WTC11 (cell line): ENCODE measurements at regions of chr15 and their contacts with region 1.

Region 1: DNA sequence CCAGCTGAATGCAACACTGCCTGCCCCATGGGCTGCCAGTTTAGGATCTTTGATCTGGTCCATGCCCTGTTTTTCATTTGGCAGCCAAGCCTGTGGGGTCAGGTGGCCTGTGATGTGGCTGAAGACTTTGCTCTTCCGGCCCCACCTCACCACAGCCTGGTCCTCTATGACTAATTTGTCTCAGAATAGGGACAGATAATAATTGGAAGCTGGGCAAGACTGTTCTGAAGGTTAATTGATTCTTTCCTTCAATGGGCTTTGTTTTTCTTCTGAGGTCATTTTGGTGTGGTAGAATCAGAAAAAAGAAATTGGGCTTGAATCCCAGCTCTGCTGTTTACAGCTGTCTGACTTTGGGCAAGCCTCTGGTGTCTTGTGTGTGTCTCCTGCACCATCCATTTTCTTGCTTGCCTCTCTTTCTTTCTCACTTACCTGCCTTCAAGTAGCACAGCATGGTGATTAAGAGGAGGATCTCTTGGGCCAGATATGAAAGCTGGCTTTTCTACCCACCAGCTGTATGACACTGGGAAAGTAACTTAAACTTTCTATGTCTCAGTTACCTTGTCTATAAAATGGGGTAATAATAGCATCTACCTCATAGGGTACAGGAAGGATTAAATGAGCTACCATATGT is 24.2 kb downstream of the ABHD2 start:
- DNase-seq: no peak
- ATAC-seq: no peak
- H3K4me3 Mint-ChIP-seq: no peak overlapping the region
- H3K27ac Mint-ChIP-seq: peak overlapping the region; percentile 54
- H3K4me1 Mint-ChIP-seq: peaks cover 87% of the 10 kb centered on the region
- H3K27me3 Mint-ChIP-seq: no peaks in the 10 kb centered on the region
- CTCF ChIP-seq: no peak

Region 2: GRCh38 chr15:88878720-88879184 is 233.7 kb before region 1 on chr15:
- CTCF ChIA-PET with region 1: interaction called, 15 read pairs
- POLR2A ChIA-PET with region 1: no interaction called
- DNase-seq: peak; percentile 86
- ATAC-seq: peak; percentile 92
- H3K4me3 Mint-ChIP-seq: no peak overlapping the region
- H3K27ac Mint-ChIP-seq: peak overlapping the region; percentile 85; the same call in 1 of the 2 replicates
- H3K4me1 Mint-ChIP-seq: peaks cover 14% of the 10 kb centered on the region
- H3K27me3 Mint-ChIP-seq: no peaks in the 10 kb centered on the region
- CTCF ChIP-seq: peak; percentile 60

Region 3: GRCh38 chr15:88938802-88939485 is 173.5 kb before region 1 on chr15:
- CTCF ChIA-PET with region 1: no interaction called
- POLR2A ChIA-PET with region 1: no interaction called
- DNase-seq: peak; percentile 33
- ATAC-seq: peak; percentile 73
- H3K4me3 Mint-ChIP-seq: no peak overlapping the region
- H3K27ac Mint-ChIP-seq: peak overlapping the region; percentile 95
- H3K4me1 Mint-ChIP-seq: peaks cover 49% of the 10 kb centered on the region
- H3K27me3 Mint-ChIP-seq: peaks cover 12% of the 10 kb centered on the region
- CTCF ChIP-seq: no peak

Region 4: GRCh38 chr15:89081878-89082277 is 30.6 kb before region 1 on chr15:
- CTCF ChIA-PET with region 1: no interaction called
- POLR2A ChIA-PET with region 1: no interaction called
- DNase-seq: no peak
- ATAC-seq: peak; percentile 55
- H3K4me3 Mint-ChIP-seq: no peak overlapping the region
- H3K27ac Mint-ChIP-seq: no peak overlapping the region
- H3K4me1 Mint-ChIP-seq: peaks cover 27% of the 10 kb centered on the region
- H3K27me3 Mint-ChIP-seq: no peaks in the 10 kb centered on the region
- CTCF ChIP-seq: no peak

Region 5: GRCh38 chr15:89101302-89102191 is 10.9 kb before region 1 on chr15:
- CTCF ChIA-PET with region 1: interaction called, 18 read pairs
- POLR2A ChIA-PET with region 1: interaction called, 3 read pairs
- DNase-seq: no peak
- ATAC-seq: no peak
- H3K4me3 Mint-ChIP-seq: no peak overlapping the region
- H3K27ac Mint-ChIP-seq: no peak overlapping the region
- H3K4me1 Mint-ChIP-seq: peaks cover 20% of the 10 kb centered on the region
- H3K27me3 Mint-ChIP-seq: no peaks in the 10 kb centered on the region
- CTCF ChIP-seq: no peak

Region 6: GRCh38 chr15:89485855-89486361 is 373.5 kb after region 1 on chr15:
- CTCF ChIA-PET with region 1: no interaction called
- POLR2A ChIA-PET with region 1: no interaction called
- DNase-seq: no peak
- ATAC-seq: 0 out of 2 replicates have a peak, but pooled peaks have one; percentile 26
- H3K4me3 Mint-ChIP-seq: peak overlapping the region; percentile 62
- H3K27ac Mint-ChIP-seq: no peak overlapping the region
- H3K4me1 Mint-ChIP-seq: peaks cover 9% of the 10 kb centered on the region
- H3K27me3 Mint-ChIP-seq: peaks cover 30% of the 10 kb centered on the region
- CTCF ChIP-seq: no peak